ENCODE measurements at regions of chr9 and their contacts with region 1.

Region 1: GRCh38 chr9:103242025-103242424 is 246.9 kb downstream of the CYLC2 start:
- DNase-seq: no peak
- ATAC-seq: no peak
- H3K4me3 ChIP-seq: no peak overlapping the region
- H3K4me3 Mint-ChIP-seq: no peak overlapping the region
- H3K27ac ChIP-seq: no peak overlapping the region
- H3K27ac Mint-ChIP-seq: no peak overlapping the region
- H3K4me1 ChIP-seq: no peaks in the 10 kb centered on the region
- H3K4me1 Mint-ChIP-seq: no peaks in the 10 kb centered on the region
- H3K27me3 ChIP-seq: no peaks in the 10 kb centered on the region
- H3K27me3 Mint-ChIP-seq: no peaks in the 10 kb centered on the region
- CTCF ChIP-seq: no peak

Region 2: GRCh38 chr9:103037508-103038477 is 204.2 kb before region 1 on chr9:
- CTCF ChIA-PET with region 1: no interaction called
- POLR2A ChIA-PET with region 1: no interaction called
- intact Hi-C with region 1: no loop called
- DNase-seq: no peak
- ATAC-seq: no peak
- H3K4me3 ChIP-seq: no peak overlapping the region
- H3K4me3 Mint-ChIP-seq: no peak overlapping the region
- H3K27ac ChIP-seq: no peak overlapping the region
- H3K27ac Mint-ChIP-seq: no peak overlapping the region
- H3K4me1 ChIP-seq: no peaks in the 10 kb centered on the region
- H3K4me1 Mint-ChIP-seq: no peaks in the 10 kb centered on the region
- H3K27me3 ChIP-seq: no peaks in the 10 kb centered on the region
- H3K27me3 Mint-ChIP-seq: no peaks in the 10 kb centered on the region
- CTCF ChIP-seq: no peak

Region 3: DNA sequence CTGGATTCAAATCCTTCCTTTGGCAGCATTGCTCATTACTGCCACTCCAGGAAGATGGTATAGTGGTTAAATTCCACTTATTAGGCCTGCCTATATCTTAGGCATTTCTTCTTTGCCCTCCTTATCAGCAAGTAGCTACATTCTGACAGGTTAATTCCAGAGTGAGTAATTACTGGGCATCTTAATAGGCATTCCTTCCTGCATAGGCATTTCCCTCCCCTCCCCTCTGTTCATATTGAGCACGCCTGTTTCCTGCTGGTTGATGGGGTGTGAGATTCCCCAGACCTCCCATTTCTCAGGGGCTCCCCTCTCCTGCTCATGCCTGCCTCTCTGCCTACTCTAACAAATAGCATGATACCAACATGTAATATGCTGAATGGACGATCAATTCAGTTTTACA is 59.0 kb after region 1 on chr9:
- CTCF ChIA-PET with region 1: no interaction called
- POLR2A ChIA-PET with region 1: no interaction called
- intact Hi-C with region 1: loop called in 1 of 2 experiments (anchors 10 kb)
- DNase-seq: no peak
- ATAC-seq: no peak
- H3K4me3 ChIP-seq: no peak overlapping the region
- H3K4me3 Mint-ChIP-seq: no peak overlapping the region
- H3K27ac ChIP-seq: no peak overlapping the region
- H3K27ac Mint-ChIP-seq: no peak overlapping the region
- H3K4me1 ChIP-seq: no peaks in the 10 kb centered on the region
- H3K4me1 Mint-ChIP-seq: no peaks in the 10 kb centered on the region
- H3K27me3 ChIP-seq: no peaks in the 10 kb centered on the region
- H3K27me3 Mint-ChIP-seq: no peaks in the 10 kb centered on the region
- CTCF ChIP-seq: no peak

Measured in CD8-positive, alpha-beta T cell (primary cell).